ENCODE measurements at regions of chr14 and their contacts with region 1.

Region 1: GRCh38 chr14:32576088-32576795 is 247.1 kb downstream of the AKAP6 start:
- DNase-seq: no peak
- H3K4me3 ChIP-seq: peak overlapping the region in 2 of 8 donors; percentile 16 to 47
- H3K27ac ChIP-seq: no peak overlapping the region
- H3K4me1 ChIP-seq: peaks cover 0 to 4% (median 0%) of the 10 kb centered on the region in 6 donors
- H3K27me3 ChIP-seq: no peaks in the 10 kb centered on the region
- CTCF ChIP-seq: peak; percentile 61 to 94 (median 86)
- POLR2A ChIP-seq: no peak

Region 2: GRCh38 chr14:33432407-33433023 is 856.3 kb after region 1 on chr14:
- intact Hi-C with region 1: loop called (anchors 10 kb)
- DNase-seq: no peak
- H3K4me3 ChIP-seq: no peak overlapping the region
- H3K27ac ChIP-seq: no peak overlapping the region
- H3K4me1 ChIP-seq: peaks cover 0 to 7% (median 0%) of the 10 kb centered on the region in 6 donors
- H3K27me3 ChIP-seq: no peaks in the 10 kb centered on the region
- CTCF ChIP-seq: peak in 4 of 11 experiments; percentile 12 to 40 (median 38)
- POLR2A ChIP-seq: no peak

Region 3: DNA sequence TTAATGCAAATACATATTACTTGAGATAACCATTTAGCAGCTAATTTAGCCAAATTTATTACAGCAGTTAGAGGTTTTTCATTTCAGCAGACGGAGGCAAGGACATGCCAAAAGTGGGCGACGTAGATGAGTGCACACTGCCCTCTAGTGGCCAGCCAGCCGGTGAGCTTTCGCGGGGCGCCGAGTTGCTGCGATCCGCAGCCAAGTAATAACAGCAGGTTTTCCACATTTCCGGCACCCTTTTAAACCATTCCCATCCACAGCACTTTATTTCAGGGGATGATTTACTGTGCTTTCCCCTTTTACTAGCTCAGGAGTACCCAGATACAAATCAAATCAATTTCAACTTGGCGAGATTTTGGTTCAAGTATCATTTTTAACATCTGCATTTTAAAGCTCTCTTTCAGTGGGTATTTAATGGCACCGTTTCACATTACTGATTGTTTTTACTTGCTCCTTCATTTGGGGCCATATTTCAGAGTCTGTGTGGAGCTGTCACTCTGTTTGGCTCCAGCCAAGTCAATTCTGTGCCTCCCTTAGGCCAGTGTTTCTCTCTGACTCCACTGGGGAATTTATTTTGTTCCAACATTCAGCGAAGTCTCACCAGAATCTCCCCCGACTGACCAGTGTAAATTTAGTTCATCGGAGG is 1216.6 kb after region 1 on chr14:
- intact Hi-C with region 1: loop called (anchors 5 kb)
- DNase-seq: peak; percentile 86
- H3K4me3 ChIP-seq: peak overlapping the region in 1 of 8 donors; percentile 35
- H3K27ac ChIP-seq: no peak overlapping the region
- H3K4me1 ChIP-seq: peaks cover 0 to 10% (median 8%) of the 10 kb centered on the region in 6 donors
- H3K27me3 ChIP-seq: peaks cover 0 to 8% (median 0%) of the 10 kb centered on the region in 7 donors
- CTCF ChIP-seq: peak; percentile 47 to 90 (median 77)
- POLR2A ChIP-seq: no peak

Region 4: GRCh38 chr14:34322940-34323418 is 1746.7 kb after region 1 on chr14:
- intact Hi-C with region 1: loop called (anchors 10 kb)
- DNase-seq: peak; percentile 87
- H3K4me3 ChIP-seq: no peak overlapping the region
- H3K27ac ChIP-seq: no peak overlapping the region
- H3K4me1 ChIP-seq: peaks cover 0 to 9% (median 3%) of the 10 kb centered on the region in 6 donors
- H3K27me3 ChIP-seq: no peaks in the 10 kb centered on the region
- CTCF ChIP-seq: peak; percentile 21 to 71 (median 55)
- POLR2A ChIP-seq: no peak